Pancreas (tissue), 10 donors: ENCODE measurements at regions of chr17 and their contacts with region 1.

Region 1: GRCh38 chr17:40345161-40345993 is 19.2 kb downstream of the GJD3 start:
- DNase-seq: peak; percentile 78 to 91 (median 84)
- ATAC-seq: peak; percentile 42 to 68 (median 56)
- H3K4me3 ChIP-seq: peak overlapping the region; percentile 20 to 73 (median 38)
- H3K27ac ChIP-seq: peak overlapping the region; percentile 12 to 82 (median 68)
- H3K4me1 ChIP-seq: peaks cover 22 to 61% (median 26%) of the 10 kb centered on the region in 3 donors
- H3K27me3 ChIP-seq: no peaks in the 10 kb centered on the region
- CTCF ChIP-seq: no peak

Region 2: DNA sequence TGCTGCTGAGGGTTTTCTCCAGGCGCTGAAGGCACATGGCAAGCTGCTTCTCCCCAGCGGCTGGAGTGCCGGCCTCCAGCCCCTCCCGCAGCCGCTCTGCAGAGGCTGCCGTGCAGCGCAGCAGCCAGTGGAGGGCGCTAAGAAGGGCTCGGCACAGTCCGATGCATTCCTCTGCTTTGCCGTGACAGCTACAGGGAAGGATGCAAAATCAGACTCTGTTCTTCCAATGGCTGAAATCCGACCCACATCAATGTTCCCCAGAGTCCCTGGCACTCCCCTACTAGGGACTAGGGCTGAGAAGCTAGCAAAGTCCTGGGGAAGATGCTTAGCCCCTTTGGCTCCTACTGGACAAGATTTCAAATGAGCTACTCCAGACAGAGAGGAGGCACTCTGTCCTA is 310.2 kb before region 1 on chr17:
- intact Hi-C with region 1: no loop called
- DNase-seq: no peak
- ATAC-seq: no peak
- H3K4me3 ChIP-seq: no peak overlapping the region
- H3K27ac ChIP-seq: no peak overlapping the region
- H3K4me1 ChIP-seq: peaks cover 18 to 24% (median 24%) of the 10 kb centered on the region in 3 donors
- H3K27me3 ChIP-seq: no peaks in the 10 kb centered on the region
- CTCF ChIP-seq: peak in 1 of 4 donors; percentile 15

Region 3: GRCh38 chr17:40209404-40210093 is 135.8 kb before region 1 on chr17:
- intact Hi-C with region 1: loop called in 1 of 3 experiments (anchors 5 kb)
- DNase-seq: peak in 1 of 6 donors; percentile 1
- ATAC-seq: no peak
- H3K4me3 ChIP-seq: no peak overlapping the region
- H3K27ac ChIP-seq: no peak overlapping the region
- H3K4me1 ChIP-seq: no peaks in the 10 kb centered on the region
- H3K27me3 ChIP-seq: no peaks in the 10 kb centered on the region
- CTCF ChIP-seq: no peak

Region 4: GRCh38 chr17:40314584-40314955 is 30.8 kb before region 1 on chr17:
- intact Hi-C with region 1: loop called in 1 of 3 experiments (anchors 5 kb)
- DNase-seq: peak; percentile 84 to 97 (median 95)
- ATAC-seq: peak; percentile 30 to 54 (median 39)
- H3K4me3 ChIP-seq: no peak overlapping the region
- H3K27ac ChIP-seq: peak overlapping the region; percentile 17 to 80 (median 34)
- H3K4me1 ChIP-seq: peaks cover 14 to 75% (median 22%) of the 10 kb centered on the region in 3 donors
- H3K27me3 ChIP-seq: no peaks in the 10 kb centered on the region
- CTCF ChIP-seq: no peak